HepG2 (cell line): ENCODE measurements at regions of chr18 and their contacts with region 1.

Region 1: GRCh38 chr18:67515945-67516538 is 478 bp downstream of the DSEL start:
- DNase-seq: peak; percentile 50
- ATAC-seq: peak; percentile 84
- H3K4me3 ChIP-seq: peak overlapping the region; percentile 46 to 70 (median 58); a peak in 5 of 6 replicates
- H3K27ac ChIP-seq: no peak overlapping the region
- H3K4me1 ChIP-seq: peaks cover 7% of the 10 kb centered on the region
- H3K27me3 ChIP-seq: peaks cover 0 to 20% of the 10 kb centered on the region in 2 experiments; a peak in 2 of 5 replicates
- CTCF ChIP-seq: peak; percentile 93
- EP300 ChIP-seq: no peak
- POLR2A ChIP-seq: no peak
- RAD21 ChIP-seq: peak; percentile 79

Region 2: DNA sequence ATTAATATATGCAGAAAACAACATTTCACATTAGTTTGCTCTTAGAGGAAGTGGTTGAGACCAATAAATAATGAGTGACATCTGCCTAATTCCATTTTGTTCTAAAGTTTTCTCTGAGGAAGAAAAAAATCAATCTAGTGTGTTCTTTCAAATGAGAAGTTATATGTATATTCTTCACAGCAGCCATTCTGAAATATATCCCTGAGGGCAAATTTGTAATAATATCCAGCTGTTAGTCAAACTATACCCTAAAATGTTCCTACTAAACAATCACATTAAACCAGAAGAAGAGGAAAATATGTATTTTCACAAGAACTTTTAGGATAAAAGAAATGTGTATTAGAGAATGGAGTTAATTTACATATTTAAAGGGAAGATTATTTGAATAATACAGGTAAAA is 537.0 kb before region 1 on chr18:
- CTCF ChIA-PET with region 1: no interaction called
- POLR2A ChIA-PET with region 1: no interaction called
- in situ Hi-C with region 1: no loop called
- intact Hi-C with region 1: no loop called
- DNase-seq: no peak
- ATAC-seq: no peak
- H3K4me3 ChIP-seq: no peak overlapping the region
- H3K27ac ChIP-seq: no peak overlapping the region
- H3K4me1 ChIP-seq: no peaks in the 10 kb centered on the region
- H3K27me3 ChIP-seq: no peaks in the 10 kb centered on the region
- CTCF ChIP-seq: no peak
- EP300 ChIP-seq: no peak
- POLR2A ChIP-seq: no peak
- RAD21 ChIP-seq: no peak

Region 3: DNA sequence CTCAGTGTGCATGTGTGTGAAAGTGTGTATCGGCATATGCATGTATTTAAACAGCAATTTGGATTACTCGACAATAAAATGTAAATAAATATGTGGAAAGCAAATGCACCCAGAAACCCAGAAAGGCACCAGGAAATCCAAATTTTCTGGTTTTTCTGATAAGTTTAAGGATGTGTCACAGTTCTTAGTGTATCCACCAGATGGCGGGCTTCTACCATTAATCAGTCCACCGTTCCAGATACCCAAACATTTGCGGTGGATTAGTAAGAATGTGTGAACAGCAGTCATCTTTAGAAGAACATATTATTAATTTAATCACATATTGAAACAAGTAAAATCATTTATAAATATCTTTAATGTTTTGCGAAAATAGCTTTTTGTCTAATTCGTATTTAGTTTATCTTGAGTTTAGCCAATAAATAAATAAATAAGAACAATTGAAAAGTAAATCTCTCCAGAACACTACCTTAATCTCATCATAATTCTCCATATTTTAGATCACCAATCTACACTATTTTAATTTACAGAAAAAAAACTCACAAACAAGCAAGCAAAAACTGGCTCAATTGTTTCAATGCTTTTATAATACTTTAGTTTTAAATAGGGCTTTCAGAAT is 298.4 kb before region 1 on chr18:
- CTCF ChIA-PET with region 1: interaction called, 4 read pairs
- POLR2A ChIA-PET with region 1: no interaction called
- in situ Hi-C with region 1: loop called (anchors 5 kb)
- intact Hi-C with region 1: loop called (anchors 1 kb)
- DNase-seq: peak; percentile 39
- ATAC-seq: peak; percentile 76
- H3K4me3 ChIP-seq: no peak overlapping the region
- H3K27ac ChIP-seq: no peak overlapping the region
- H3K4me1 ChIP-seq: no peaks in the 10 kb centered on the region
- H3K27me3 ChIP-seq: peaks cover 0 to 10% of the 10 kb centered on the region in 2 experiments; a peak in 1 of 5 replicates
- CTCF ChIP-seq: peak; percentile 71
- EP300 ChIP-seq: no peak
- POLR2A ChIP-seq: no peak
- RAD21 ChIP-seq: no peak

Region 4: GRCh38 chr18:67475673-67476072 is 40.4 kb before region 1 on chr18:
- CTCF ChIA-PET with region 1: no interaction called
- POLR2A ChIA-PET with region 1: no interaction called
- in situ Hi-C with region 1: no loop called
- intact Hi-C with region 1: no loop called
- DNase-seq: no peak
- ATAC-seq: no peak
- H3K4me3 ChIP-seq: no peak overlapping the region
- H3K27ac ChIP-seq: no peak overlapping the region
- H3K4me1 ChIP-seq: no peaks in the 10 kb centered on the region
- H3K27me3 ChIP-seq: no peaks in the 10 kb centered on the region
- CTCF ChIP-seq: no peak
- EP300 ChIP-seq: no peak
- POLR2A ChIP-seq: no peak
- RAD21 ChIP-seq: no peak

Region 5: GRCh38 chr18:67682516-67682915 is 166.5 kb after region 1 on chr18:
- CTCF ChIA-PET with region 1: no interaction called
- POLR2A ChIA-PET with region 1: no interaction called
- in situ Hi-C with region 1: no loop called
- intact Hi-C with region 1: no loop called
- DNase-seq: no peak
- ATAC-seq: no peak
- H3K4me3 ChIP-seq: no peak overlapping the region
- H3K27ac ChIP-seq: no peak overlapping the region
- H3K4me1 ChIP-seq: no peaks in the 10 kb centered on the region
- H3K27me3 ChIP-seq: no peaks in the 10 kb centered on the region
- CTCF ChIP-seq: no peak
- EP300 ChIP-seq: no peak
- POLR2A ChIP-seq: no peak
- RAD21 ChIP-seq: no peak

Region 6: GRCh38 chr18:67710639-67711038 is 194.6 kb after region 1 on chr18:
- CTCF ChIA-PET with region 1: no interaction called
- POLR2A ChIA-PET with region 1: no interaction called
- in situ Hi-C with region 1: no loop called
- intact Hi-C with region 1: loop called (anchors 2 kb)
- DNase-seq: peak; percentile 15
- ATAC-seq: peak; percentile 88
- H3K4me3 ChIP-seq: no peak overlapping the region
- H3K27ac ChIP-seq: no peak overlapping the region
- H3K4me1 ChIP-seq: no peaks in the 10 kb centered on the region
- H3K27me3 ChIP-seq: no peaks in the 10 kb centered on the region
- CTCF ChIP-seq: 0 out of 2 replicates have a peak, but pooled peaks have one; percentile 31
- EP300 ChIP-seq: no peak
- POLR2A ChIP-seq: no peak
- RAD21 ChIP-seq: no peak

Region 7: DNA sequence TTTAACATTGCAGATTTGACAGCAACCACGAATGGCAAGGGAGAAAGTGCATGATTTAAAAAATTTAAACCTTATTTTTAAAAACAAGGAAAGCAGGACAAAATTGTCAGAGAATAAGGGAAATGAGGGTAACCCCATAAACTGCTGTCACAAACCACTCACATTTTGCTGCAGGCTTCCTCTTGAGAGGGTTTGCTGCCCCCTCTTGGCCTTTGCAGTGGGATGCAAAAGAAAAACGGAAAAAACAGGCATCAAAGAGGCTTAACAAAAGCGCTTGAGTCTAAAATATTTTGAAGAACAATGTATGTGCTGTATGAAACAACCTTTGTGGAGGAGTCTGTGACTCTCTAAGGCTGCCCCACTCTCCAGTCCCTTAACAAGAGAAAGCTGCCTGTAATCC is 1107.3 kb after region 1 on chr18:
- CTCF ChIA-PET with region 1: interaction called, 3 read pairs
- POLR2A ChIA-PET with region 1: no interaction called
- in situ Hi-C with region 1: loop called (anchors 10 kb)
- intact Hi-C with region 1: no loop called
- DNase-seq: peak; percentile 47
- ATAC-seq: peak; percentile 84
- H3K4me3 ChIP-seq: no peak overlapping the region
- H3K27ac ChIP-seq: no peak overlapping the region
- H3K4me1 ChIP-seq: no peaks in the 10 kb centered on the region
- H3K27me3 ChIP-seq: no peaks in the 10 kb centered on the region; a peak in 1 of 5 replicates
- CTCF ChIP-seq: peak; percentile 78
- EP300 ChIP-seq: no peak
- POLR2A ChIP-seq: no peak
- RAD21 ChIP-seq: 0 out of 2 replicates have a peak, but pooled peaks have one; percentile 30

Region 8: DNA sequence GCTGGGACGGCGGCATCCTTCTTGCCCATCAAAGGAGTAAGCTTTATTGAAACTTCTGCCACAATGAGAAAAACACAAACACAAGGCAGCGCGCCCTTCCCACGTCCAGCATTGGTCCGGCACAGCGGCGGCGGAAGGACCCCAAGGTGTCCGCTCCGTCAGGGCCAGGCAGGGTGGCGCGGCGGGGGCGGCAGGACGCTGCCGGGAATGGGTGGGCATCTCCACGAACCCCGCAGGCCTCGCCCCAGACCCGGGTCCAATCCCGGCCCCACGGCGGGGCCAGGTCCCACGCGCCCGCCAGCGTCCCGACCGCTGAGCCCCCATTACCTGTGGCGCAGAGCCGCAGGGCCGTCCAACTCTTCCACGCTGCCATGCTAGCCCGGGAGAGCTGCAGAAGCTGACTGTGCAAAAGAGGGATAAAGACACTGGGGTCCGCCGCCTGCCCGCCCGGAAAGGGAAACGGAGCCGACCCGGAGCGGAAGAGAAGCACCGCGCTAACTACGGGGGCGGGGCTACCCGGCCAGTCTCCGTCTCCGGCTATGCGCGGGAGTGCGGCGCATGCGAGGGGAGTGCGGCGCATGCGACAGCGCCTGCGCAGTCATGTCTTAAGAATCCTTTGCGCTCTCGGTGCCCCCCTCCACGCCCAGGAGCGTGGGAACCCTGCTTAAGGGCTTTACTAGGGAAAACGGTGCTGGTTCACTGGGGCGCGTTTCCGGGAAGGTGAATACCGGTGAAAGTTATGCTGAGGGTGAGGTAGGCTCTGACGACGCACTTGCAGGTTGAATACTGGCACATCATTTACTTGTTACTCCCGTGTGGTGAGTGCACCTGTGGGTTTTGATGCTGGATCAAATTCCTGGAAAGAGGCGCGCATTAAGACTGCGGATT is 1198.8 kb after region 1 on chr18 and contains the start of gene TMX3:
- CTCF ChIA-PET with region 1: no interaction called
- POLR2A ChIA-PET with region 1: no interaction called
- in situ Hi-C with region 1: no loop called
- intact Hi-C with region 1: loop called (anchors 10 kb)
- DNase-seq: peak; percentile 89
- ATAC-seq: peak; percentile 99
- H3K4me3 ChIP-seq: peak within 1 kb of the TSS; percentile 84 to 96 (median 94)
- H3K27ac ChIP-seq: peak within 1 kb of the TSS; percentile 80
- H3K4me1 ChIP-seq: peaks cover 26% of the 10 kb centered on the region
- H3K27me3 ChIP-seq: no peaks in the 10 kb centered on the region; a peak in 1 of 5 replicates
- CTCF ChIP-seq: peak; percentile 6; the same call in 1 of the 2 replicates
- EP300 ChIP-seq: no peak
- POLR2A ChIP-seq: peak; percentile 43 to 59; a peak in 3 of 4 replicates
- RAD21 ChIP-seq: 0 out of 2 replicates have a peak, but pooled peaks have one; percentile 9
- total RNA-seq, gene TMX3: 11.6 and 25.0 TPM in 2 replicates